Activated CD8-positive, alpha-beta T cell treated with anti-CD3 and anti-CD28 coated beads for 36 hours (primary cell): ENCODE measurements at regions of chr3 and their contacts with region 1.

Region 1: GRCh38 chr3:42190701-42191462 is 75.1 kb downstream of the CCK start:
- DNase-seq: peak; percentile 79
- ATAC-seq: peak; percentile 78
- H3K4me3 Mint-ChIP-seq: no peak overlapping the region
- H3K27ac Mint-ChIP-seq: no peak overlapping the region
- H3K4me1 Mint-ChIP-seq: peaks cover 13% of the 10 kb centered on the region
- H3K27me3 Mint-ChIP-seq: no peaks in the 10 kb centered on the region
- CTCF ChIP-seq: peak; percentile 81

Region 2: GRCh38 chr3:41893977-41894376 is 296.9 kb before region 1 on chr3:
- CTCF ChIA-PET with region 1: interaction called, 5 read pairs
- POLR2A ChIA-PET with region 1: no interaction called
- intact Hi-C with region 1: loop called (anchors 10 kb)
- DNase-seq: peak; percentile 13
- ATAC-seq: no peak
- H3K4me3 Mint-ChIP-seq: no peak overlapping the region
- H3K27ac Mint-ChIP-seq: no peak overlapping the region
- H3K4me1 Mint-ChIP-seq: no peaks in the 10 kb centered on the region
- H3K27me3 Mint-ChIP-seq: no peaks in the 10 kb centered on the region
- CTCF ChIP-seq: peak; percentile 60

Region 3: DNA sequence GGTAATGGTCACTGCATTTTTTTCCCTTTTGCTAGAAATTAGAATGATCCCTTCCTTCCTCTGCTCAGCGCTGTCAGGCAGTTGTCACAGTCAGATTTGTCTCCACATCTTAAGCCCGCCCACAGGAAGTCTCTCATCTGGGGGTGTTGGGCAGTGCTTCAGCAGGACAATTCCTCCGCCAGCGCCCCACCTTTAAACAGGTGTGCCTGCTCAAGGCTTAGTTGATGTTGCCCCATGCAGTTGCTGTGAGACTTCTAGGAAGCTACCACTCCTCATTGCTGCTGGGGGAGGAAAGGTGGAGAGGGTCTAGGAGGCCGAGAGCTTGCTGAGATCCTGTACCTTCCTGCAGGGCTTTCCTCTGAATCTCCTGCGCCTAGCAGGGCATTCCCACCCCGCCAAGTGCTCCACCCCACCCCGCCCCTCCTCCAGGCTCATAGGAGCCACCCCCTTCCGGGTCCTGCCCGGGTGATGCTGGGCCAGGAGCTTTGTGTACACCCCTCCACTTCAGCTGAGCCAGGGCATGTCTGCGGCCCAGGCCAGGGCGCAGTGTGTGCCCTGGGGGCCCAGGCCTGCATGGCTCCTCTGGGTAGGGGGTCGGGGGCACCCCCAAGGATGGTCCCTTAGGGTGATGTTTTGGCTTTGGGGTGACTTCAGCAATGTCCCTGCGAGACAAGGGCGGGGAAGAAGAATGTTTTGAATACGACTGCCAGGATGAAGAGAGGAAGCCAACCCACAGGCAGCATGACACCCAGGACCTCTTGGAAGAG is 31.0 kb before region 1 on chr3:
- CTCF ChIA-PET with region 1: interaction called, 14 read pairs
- POLR2A ChIA-PET with region 1: no interaction called
- intact Hi-C with region 1: no loop called
- DNase-seq: peak; percentile 70
- ATAC-seq: peak; percentile 91
- H3K4me3 Mint-ChIP-seq: peak overlapping the region; percentile 2
- H3K27ac Mint-ChIP-seq: peak overlapping the region; percentile 5
- H3K4me1 Mint-ChIP-seq: peaks cover 29% of the 10 kb centered on the region
- H3K27me3 Mint-ChIP-seq: no peaks in the 10 kb centered on the region
- CTCF ChIP-seq: no peak

Region 4: GRCh38 chr3:42175386-42176240 is 15.3 kb before region 1 on chr3:
- CTCF ChIA-PET with region 1: interaction called, 35 read pairs
- POLR2A ChIA-PET with region 1: interaction called, 3 read pairs
- intact Hi-C with region 1: no loop called
- DNase-seq: no peak
- ATAC-seq: no peak
- H3K4me3 Mint-ChIP-seq: no peak overlapping the region
- H3K27ac Mint-ChIP-seq: no peak overlapping the region
- H3K4me1 Mint-ChIP-seq: peaks cover 31% of the 10 kb centered on the region
- H3K27me3 Mint-ChIP-seq: no peaks in the 10 kb centered on the region
- CTCF ChIP-seq: no peak

Region 5: DNA sequence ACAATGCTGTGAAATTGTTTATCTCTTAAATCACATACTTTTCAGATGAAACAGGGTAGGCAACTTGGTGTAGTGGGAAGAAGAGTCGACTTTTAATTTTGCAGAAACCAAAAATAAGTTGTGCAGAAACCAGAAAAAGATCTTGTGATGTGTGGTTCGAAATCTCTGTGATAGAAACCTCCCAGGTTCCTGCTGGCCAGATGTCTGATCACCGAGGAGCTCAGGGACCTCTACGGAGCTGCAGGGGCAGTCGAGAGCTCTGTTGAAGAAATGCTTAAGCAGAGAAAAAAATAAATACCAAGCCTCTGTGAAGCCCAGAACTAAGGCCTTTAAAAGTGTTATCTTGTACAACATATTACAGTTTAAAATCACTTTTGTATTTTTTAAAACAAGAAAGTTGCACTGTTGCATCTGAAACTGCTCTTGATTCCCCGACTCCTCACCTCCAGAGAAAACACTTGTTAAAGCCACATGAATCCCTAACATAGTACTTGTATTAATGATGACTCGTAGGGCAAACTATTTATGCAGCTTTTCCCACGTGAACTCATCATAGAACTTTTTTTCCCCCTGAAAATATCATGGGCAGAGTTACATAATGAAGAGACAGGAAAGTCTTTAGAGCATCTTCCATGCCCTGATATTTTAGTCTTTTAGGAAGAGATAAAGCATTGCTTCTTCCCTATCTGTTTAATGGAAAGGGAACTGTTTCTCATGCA is 23.8 kb after region 1 on chr3:
- CTCF ChIA-PET with region 1: interaction called, 17 read pairs
- POLR2A ChIA-PET with region 1: no interaction called
- intact Hi-C with region 1: no loop called
- DNase-seq: no peak
- ATAC-seq: no peak
- H3K4me3 Mint-ChIP-seq: no peak overlapping the region
- H3K27ac Mint-ChIP-seq: peak overlapping the region; percentile 54
- H3K4me1 Mint-ChIP-seq: peaks cover 53% of the 10 kb centered on the region
- H3K27me3 Mint-ChIP-seq: no peaks in the 10 kb centered on the region
- CTCF ChIP-seq: no peak